Activated T-helper 2 cell treated with anti-CD3 and anti-CD28 coated beads, Interferon-gamma antibody, Interleukin-2, Interleukin-4, amounts not matched to agents 10 μg/mL and 5 μg/mL and 100 μg/mL, durations not matched to agents 14 hours and 24 hours and 36 hours (primary cell): ENCODE measurements at regions of chr2 and their contacts with region 1.

Region 1: GRCh38 chr2:18540872-18541271 is 19.6 kb downstream of the RDH14 start:
- DNase-seq: no peak
- H3K4me3 Mint-ChIP-seq: no peak overlapping the region
- H3K27ac Mint-ChIP-seq: no peak overlapping the region
- H3K4me1 Mint-ChIP-seq: peaks cover 17% of the 10 kb centered on the region
- H3K27me3 Mint-ChIP-seq: peaks cover 3% of the 10 kb centered on the region

Region 2: DNA sequence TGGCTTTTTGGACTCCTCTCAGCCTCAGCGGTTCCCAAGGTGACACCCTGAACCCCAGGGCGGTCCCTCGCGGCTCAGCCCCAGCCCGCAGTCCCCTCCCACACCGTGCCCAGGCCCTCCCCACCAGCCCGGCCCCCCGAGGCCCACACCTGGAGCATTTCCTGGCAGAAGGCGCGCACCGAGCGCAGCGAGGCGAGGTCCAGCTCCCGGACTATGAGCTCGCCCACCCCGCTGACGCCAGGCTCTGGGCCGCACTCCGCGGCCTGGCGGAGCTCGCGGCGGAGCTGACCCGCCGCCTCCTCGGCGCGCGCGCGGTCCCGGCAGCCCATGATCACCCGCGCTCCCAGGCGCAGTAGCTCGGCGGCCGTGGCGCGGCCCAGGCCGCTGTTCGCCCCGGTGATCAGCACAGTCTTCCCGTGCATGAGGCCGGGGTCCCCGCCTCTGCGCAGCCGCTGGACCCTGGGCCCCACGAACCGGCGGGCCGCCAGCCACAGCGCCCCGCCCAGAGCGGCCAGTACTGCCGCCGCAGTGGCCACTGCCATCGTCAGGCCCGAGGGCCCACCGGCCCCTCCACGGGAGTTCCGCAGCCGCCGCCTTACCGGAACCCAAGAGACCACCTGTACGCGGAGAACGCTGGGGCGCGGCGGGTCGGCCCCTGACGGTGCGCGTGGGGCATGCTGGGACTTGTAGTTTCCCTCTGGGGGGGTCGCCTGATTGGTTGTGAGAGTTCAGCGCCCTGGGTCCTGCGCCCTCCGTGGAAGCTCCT is 19.3 kb after region 1 on chr2 and contains the start of gene RDH14:
- intact Hi-C with region 1: loop called (anchors 1 kb)
- DNase-seq: peak; percentile 86
- H3K4me3 Mint-ChIP-seq: peak within 1 kb of the TSS; percentile 88
- H3K27ac Mint-ChIP-seq: peak within 1 kb of the TSS; percentile 90
- H3K4me1 Mint-ChIP-seq: peaks cover 31% of the 10 kb centered on the region
- H3K27me3 Mint-ChIP-seq: no peaks in the 10 kb centered on the region
- total RNA-seq, gene RDH14: 12.4 and 15.2 TPM in 2 replicates

Region 3: DNA sequence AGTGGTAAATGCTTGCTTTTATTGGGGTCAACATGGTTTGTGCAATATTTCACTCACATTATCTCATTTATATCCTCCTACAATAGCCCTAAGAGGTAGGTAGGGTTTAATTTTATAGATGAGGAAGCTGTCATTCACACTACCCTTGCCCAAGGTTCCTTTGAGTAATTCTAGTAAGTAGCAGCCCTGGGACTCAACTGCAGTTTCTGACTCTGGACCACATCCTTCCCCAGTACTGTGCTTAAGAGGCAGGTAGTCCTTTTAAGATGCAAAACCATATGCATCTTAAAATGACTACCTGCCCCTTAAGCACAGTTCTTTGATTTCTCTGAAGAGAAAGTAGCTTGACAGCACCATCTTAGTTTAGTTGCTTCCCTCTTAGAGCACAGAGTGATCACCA is 64.2 kb after region 1 on chr2:
- intact Hi-C with region 1: loop called (anchors 1 kb)
- DNase-seq: no peak
- H3K4me3 Mint-ChIP-seq: no peak overlapping the region
- H3K27ac Mint-ChIP-seq: no peak overlapping the region
- H3K4me1 Mint-ChIP-seq: peaks cover 14% of the 10 kb centered on the region
- H3K27me3 Mint-ChIP-seq: no peaks in the 10 kb centered on the region